Activated CD8-positive, alpha-beta T cell treated with anti-CD3 and anti-CD28 coated beads, Interleukin-2, amount 10 ng/mL, durations not matched to agents 7 days and 5 days (primary cell): ENCODE measurements at regions of chr7 and their contacts with region 1.

Region 1: GRCh38 chr7:22082886-22083703 is 137.4 kb upstream of the CDCA7L start:
- DNase-seq: peak; percentile 85
- ATAC-seq: peak; percentile 99
- H3K4me3 Mint-ChIP-seq: peak overlapping the region; percentile 77
- H3K27ac Mint-ChIP-seq: peak overlapping the region; percentile 40
- H3K4me1 Mint-ChIP-seq: peaks cover 16% of the 10 kb centered on the region
- H3K27me3 Mint-ChIP-seq: peaks cover 40% of the 10 kb centered on the region

Region 2: DNA sequence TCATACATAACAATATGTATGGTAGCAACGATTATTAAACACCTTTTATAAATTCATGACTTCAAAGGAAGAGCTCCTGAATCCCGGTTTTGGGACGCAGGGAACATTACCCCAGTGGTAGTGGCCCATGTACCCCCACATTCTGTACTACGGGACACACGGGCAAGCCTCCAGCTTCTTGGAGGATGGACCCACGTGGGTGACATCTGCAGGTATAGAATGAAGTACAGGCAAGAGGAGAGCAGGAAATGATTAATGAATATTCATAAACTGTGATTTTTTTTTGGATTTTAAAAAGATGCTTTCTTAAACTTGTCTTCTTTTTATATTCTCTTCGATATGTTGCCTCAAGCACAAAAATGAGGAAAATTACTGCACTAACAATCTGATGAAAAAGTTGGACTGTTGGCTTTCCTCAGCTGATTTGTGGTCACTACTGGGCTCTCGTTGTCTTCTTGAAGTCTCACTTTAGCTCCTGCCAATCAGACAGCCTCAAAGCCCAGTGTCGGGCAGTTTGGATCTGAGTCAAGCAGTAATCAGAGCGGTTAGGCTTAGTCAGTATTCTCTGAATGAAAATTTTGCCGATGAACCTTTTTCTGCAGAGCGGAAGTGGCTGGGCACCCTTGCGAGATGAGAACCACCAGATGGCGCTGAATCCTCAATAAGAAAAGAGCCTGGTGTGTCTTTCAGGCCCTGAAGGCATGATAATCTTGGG is 20.3 kb after region 1 on chr7:
- CTCF ChIA-PET with region 1: interaction called, 10 read pairs
- POLR2A ChIA-PET with region 1: no interaction called
- DNase-seq: peak; percentile 77
- ATAC-seq: peak; percentile 88
- H3K4me3 Mint-ChIP-seq: no peak overlapping the region
- H3K27ac Mint-ChIP-seq: no peak overlapping the region
- H3K4me1 Mint-ChIP-seq: peaks cover 3% of the 10 kb centered on the region
- H3K27me3 Mint-ChIP-seq: peaks cover 6% of the 10 kb centered on the region